Activated naive CD4-positive, alpha-beta T cell treated with anti-CD3 and anti-CD28 coated beads for 36 hours (primary cell): ENCODE measurements at regions of chr5 and their contacts with region 1.

Region 1: GRCh38 chr5:82480331-82480730 is 202.2 kb upstream of the RPS23 start:
- DNase-seq: no peak
- H3K4me3 Mint-ChIP-seq: no peak overlapping the region
- H3K27ac Mint-ChIP-seq: no peak overlapping the region
- H3K4me1 Mint-ChIP-seq: no peaks in the 10 kb centered on the region
- H3K27me3 Mint-ChIP-seq: peaks cover 13% of the 10 kb centered on the region

Region 2: GRCh38 chr5:82540301-82540700 is 60.0 kb after region 1 on chr5:
- CTCF ChIA-PET with region 1: no interaction called
- intact Hi-C with region 1: loop called (anchors 2 kb)
- DNase-seq: no peak
- H3K4me3 Mint-ChIP-seq: no peak overlapping the region
- H3K27ac Mint-ChIP-seq: no peak overlapping the region
- H3K4me1 Mint-ChIP-seq: no peaks in the 10 kb centered on the region
- H3K27me3 Mint-ChIP-seq: peaks cover 7% of the 10 kb centered on the region

Region 3: DNA sequence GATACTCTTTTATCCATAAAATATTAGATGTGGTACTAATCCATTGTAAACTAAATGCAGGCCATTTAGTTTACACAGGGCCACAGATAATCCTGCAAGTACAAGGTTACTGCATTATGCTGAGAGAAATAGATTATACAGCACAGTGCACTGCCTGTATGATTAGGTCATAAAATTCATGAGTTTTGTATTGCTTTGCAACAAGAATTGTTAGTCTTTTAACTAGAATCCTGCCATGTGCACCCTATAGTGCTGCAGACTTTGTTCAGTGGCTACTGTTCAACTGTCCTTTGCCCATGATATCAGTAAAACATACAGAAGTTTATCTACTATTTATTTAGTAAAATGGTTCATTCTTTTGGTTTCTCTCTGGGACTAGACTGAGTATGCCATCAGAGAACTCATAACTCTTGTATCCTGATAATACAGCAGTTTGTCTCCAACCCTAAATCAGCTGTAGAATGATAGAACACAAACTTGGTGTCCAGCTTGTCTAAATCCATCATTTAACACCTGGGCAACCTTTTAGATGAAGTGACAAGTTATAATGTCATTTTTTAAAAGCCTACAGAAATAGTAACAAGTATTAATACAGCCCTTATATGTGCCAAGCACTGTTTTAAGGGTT is 305.7 kb after region 1 on chr5:
- CTCF ChIA-PET with region 1: no interaction called
- intact Hi-C with region 1: no loop called
- DNase-seq: no peak
- H3K4me3 Mint-ChIP-seq: no peak overlapping the region
- H3K27ac Mint-ChIP-seq: no peak overlapping the region
- H3K4me1 Mint-ChIP-seq: no peaks in the 10 kb centered on the region
- H3K27me3 Mint-ChIP-seq: no peaks in the 10 kb centered on the region